ENCODE measurements at regions of chr3 and their contacts with region 1.

Region 1: DNA sequence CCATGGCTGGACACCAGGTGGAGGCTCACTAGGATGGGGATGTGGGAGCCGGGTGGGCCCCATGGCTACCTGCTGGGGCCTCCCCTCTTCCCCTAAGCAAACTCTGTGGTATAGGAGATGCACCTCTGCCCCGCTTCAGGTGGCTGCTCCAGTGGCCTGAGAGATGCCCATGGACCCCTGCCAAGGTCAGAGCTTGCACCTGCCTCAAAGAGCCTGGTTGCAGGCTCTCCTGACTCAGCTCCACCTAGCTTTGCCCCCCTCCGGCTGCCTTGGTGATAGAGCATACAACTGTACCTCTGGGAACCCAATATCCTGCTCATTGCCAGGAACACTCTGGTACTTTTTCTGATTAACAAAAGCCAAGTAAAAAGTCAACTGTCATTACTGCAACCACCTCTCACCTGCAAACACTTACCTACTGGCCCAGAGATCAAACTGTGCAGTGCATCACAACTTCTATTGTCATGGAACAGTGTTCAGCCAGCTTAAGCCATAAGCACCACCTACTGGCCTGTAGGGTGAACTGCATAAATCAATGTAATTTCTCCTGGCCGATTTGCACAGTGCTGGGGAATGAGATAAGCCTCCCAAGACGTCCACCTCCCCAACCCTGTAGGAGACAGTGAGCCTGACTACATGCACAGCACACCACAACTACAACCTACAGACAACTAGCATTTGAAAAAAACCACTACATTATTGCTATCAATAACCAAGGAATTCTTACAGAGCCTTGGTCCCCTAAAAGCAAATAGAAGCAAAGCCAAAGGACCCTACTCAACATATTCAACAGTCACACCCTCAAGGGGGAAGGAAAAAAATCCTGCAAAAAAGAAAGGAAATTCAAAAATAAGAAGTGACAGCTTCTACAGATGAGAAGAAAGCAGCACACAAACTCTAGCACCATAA is 352.4 kb upstream of the ARHGEF26 start:
- DNase-seq: no peak
- ATAC-seq: peak; percentile 90 to 95
- H3K4me3 ChIP-seq: no peak overlapping the region
- H3K27ac ChIP-seq: no peak overlapping the region
- H3K4me1 ChIP-seq: no peaks in the 10 kb centered on the region
- H3K27me3 ChIP-seq: no peaks in the 10 kb centered on the region
- CTCF ChIP-seq: peak; percentile 83

Region 2: DNA sequence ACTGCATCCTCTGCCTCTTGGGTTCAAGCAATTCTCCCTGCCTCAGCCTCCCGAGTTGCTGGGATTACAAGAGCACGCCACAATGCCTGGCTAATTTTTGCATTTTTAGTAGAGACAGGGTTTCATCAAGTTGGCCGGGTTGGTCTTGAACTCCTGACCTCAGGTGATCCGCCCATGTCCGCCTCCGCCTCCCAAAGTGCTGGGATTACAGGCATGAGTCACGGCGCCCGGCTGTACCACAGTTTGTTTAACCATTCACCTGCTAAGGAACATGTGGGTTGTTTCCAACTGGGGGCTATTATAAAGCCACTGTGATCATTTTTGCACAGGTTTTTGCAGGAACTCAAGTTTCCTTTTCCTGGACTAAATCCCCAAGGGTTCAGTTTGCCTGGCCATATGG is 730.0 kb before region 1 on chr3:
- intact Hi-C with region 1: loop called (anchors 10 kb)
- DNase-seq: no peak
- ATAC-seq: no peak
- H3K4me3 ChIP-seq: no peak overlapping the region
- H3K27ac ChIP-seq: no peak overlapping the region
- H3K4me1 ChIP-seq: peaks cover 6% of the 10 kb centered on the region
- H3K27me3 ChIP-seq: no peaks in the 10 kb centered on the region
- CTCF ChIP-seq: no peak

Region 3: DNA sequence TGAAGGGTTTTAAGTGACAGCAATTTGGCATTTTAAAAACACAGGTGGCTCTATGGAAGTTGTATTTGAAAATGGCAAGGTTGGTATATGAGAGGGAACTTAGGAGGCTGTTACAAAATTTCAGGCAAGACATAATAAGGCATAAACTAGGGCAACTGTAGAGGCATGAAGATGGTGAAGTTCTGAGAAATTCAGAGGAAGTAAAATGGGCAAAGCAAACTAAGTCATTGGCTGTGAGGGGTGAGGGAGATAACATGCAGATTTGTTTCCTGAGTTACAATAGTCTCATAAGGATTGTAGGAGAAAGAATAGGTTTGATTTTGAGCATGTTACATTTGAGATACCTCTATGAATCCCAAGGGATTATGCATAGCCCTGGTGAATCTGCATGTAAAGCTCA is 49.5 kb after region 1 on chr3:
- intact Hi-C with region 1: no loop called
- DNase-seq: no peak
- ATAC-seq: no peak
- H3K4me3 ChIP-seq: no peak overlapping the region
- H3K27ac ChIP-seq: no peak overlapping the region
- H3K4me1 ChIP-seq: no peaks in the 10 kb centered on the region
- H3K27me3 ChIP-seq: no peaks in the 10 kb centered on the region
- CTCF ChIP-seq: no peak

Region 4: GRCh38 chr3:154584974-154585373 is 816.2 kb after region 1 on chr3:
- intact Hi-C with region 1: no loop called
- DNase-seq: no peak
- ATAC-seq: peak; percentile 39 to 42
- H3K4me3 ChIP-seq: no peak overlapping the region
- H3K27ac ChIP-seq: no peak overlapping the region
- H3K4me1 ChIP-seq: no peaks in the 10 kb centered on the region
- H3K27me3 ChIP-seq: no peaks in the 10 kb centered on the region
- CTCF ChIP-seq: no peak